Activated naive CD8-positive, alpha-beta T cell treated with anti-CD3 and anti-CD28 coated beads, Interleukin-2, amount 10 ng/mL, durations not matched to agents 7 days and 5 days (primary cell): ENCODE measurements at regions of chr10 and their contacts with region 1.

Region 1: DNA sequence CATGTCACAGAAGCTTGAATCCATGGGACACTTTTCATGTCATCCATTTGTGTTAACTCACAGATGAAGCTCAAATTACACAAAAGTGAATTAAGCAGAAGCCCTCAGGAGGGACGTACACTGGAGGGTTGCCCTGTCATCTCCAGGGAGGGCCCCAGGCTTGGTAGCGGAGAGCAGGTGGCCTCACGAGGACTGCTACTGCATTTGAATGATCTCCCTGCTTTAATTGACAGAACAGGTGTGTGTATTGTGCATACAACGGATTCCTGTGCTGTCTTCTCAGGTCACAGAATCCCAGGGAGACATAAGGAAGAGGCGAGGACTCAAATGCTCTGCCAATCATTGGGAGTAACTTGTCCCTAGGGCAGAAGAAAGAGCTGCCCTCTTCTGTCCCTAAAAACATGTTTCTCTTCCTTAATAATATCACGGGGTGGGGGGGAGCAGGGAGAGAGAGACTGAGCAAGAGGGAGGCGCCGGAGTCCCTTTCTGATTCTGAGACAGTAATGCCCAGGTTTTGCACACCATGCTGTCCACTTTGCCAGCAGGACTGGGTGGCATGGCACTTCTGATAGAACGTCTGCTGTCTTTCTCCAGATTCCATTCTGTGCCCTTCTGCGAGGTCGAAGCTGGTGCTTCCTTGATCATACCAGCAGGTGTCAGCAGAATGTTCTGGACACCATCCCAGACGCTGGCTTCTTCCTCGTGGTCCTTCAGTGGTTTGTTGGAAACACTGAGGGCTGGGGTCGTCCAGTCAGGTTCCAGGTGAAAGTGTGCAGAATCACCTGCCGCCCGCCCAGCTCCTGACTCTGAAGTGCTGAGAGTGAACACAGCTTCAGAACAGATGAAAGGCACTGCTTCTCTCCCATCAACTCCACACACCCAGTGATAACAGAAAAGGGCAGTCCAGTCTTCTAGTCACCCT is 26.2 kb upstream of the RASGEF1A start:
- DNase-seq: peak; percentile 58
- ATAC-seq: peak; percentile 57
- H3K4me3 Mint-ChIP-seq: peak overlapping the region; percentile 56
- H3K27ac Mint-ChIP-seq: peak overlapping the region; percentile 83
- H3K4me1 Mint-ChIP-seq: peaks cover 48% of the 10 kb centered on the region
- H3K27me3 Mint-ChIP-seq: peaks cover 23% of the 10 kb centered on the region

Region 2: DNA sequence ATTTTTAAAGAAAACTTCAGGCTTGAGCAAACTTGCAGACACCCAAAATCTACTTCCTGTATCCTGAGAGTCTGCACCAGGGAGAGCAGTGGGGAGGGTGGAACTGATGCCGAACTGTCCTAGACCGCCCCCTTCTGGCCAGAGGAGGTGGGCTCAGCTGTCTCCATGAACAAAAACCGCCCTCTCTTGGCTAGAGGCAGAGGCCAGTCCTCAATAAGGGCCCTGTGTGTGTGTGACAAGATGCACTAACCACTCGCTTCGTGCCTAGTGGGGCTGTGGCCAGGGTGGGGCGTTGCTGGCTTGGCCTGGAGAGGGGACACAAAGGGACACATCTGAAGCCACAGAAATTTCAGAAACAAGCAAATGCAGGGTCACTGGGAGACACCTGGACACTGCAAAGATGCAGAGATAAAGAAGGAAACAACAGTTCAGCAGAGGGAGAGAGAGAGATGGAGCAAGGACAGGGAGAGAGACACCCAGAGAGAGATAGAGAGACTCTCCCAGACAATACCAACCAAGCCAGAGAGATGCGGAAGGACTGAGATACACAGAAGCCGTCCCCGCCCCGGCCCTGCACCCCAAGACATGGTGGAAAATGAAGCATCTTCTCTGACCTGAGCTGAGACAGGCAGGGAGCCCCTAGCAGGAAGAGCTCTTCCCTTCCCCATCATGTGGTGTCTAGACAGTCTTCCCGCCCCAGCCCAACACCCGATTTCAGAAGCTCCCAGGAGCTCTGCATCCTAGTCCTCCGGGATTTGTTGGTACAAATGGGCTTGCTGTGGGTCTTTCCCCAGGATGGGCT is 55.7 kb after region 1 on chr10:
- POLR2A ChIA-PET with region 1: interaction called, 20 read pairs
- DNase-seq: peak; percentile 85
- ATAC-seq: peak; percentile 99
- H3K4me3 Mint-ChIP-seq: peak overlapping the region; percentile 22
- H3K27ac Mint-ChIP-seq: peak overlapping the region; percentile 69
- H3K4me1 Mint-ChIP-seq: peaks cover 30% of the 10 kb centered on the region
- H3K27me3 Mint-ChIP-seq: peaks cover 26% of the 10 kb centered on the region